Activated T-helper 2 cell treated with anti-CD3 and anti-CD28 coated beads, Interferon-gamma antibody, Interleukin-2, Interleukin-4, amounts not matched to agents 10 μg/mL and 5 μg/mL and 100 μg/mL, durations not matched to agents 14 hours and 24 hours and 36 hours (primary cell): ENCODE measurements at regions of chr1 and their contacts with region 1.

Region 1: GRCh38 chr1:158285756-158286241 is 3.9 kb upstream of the CD1C start:
- DNase-seq: no peak
- H3K4me3 Mint-ChIP-seq: no peak overlapping the region
- H3K27ac Mint-ChIP-seq: peak overlapping the region; percentile 69
- H3K4me1 Mint-ChIP-seq: peaks cover 26% of the 10 kb centered on the region
- H3K27me3 Mint-ChIP-seq: peaks cover 3% of the 10 kb centered on the region

Region 2: DNA sequence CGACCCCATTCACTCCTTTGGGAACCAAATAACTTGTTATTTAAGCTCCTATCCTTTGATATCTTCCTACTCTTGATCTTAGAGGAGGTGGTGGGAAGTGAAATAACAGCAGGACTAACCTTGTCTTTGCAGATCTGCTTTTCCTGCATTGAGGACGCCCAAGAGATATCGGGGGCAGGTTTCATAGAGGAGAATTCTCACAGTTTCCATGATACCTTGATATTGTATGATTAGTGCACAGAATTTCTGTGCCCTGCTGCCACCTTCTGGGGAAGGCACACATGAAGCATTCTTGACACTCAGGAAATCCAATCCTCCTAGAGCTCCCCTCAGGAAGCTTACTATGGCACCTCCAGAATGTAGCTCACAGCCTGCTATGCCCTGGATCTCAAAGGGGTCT is 43.9 kb after region 1 on chr1:
- intact Hi-C with region 1: loop called (anchors 5 kb)
- DNase-seq: no peak
- H3K4me3 Mint-ChIP-seq: no peak overlapping the region
- H3K27ac Mint-ChIP-seq: no peak overlapping the region
- H3K4me1 Mint-ChIP-seq: peaks cover 11% of the 10 kb centered on the region
- H3K27me3 Mint-ChIP-seq: peaks cover 1% of the 10 kb centered on the region

Region 3: GRCh38 chr1:158398818-158399514 is 113.2 kb after region 1 on chr1 and contains the start of gene OR10T2:
- intact Hi-C with region 1: no loop called
- DNase-seq: no peak
- H3K4me3 Mint-ChIP-seq: no peak within 1 kb of the TSS
- H3K27ac Mint-ChIP-seq: no peak within 1 kb of the TSS
- H3K4me1 Mint-ChIP-seq: peaks cover 3% of the 10 kb centered on the region
- H3K27me3 Mint-ChIP-seq: peaks cover 21% of the 10 kb centered on the region
- total RNA-seq, gene OR10T2: not detected in 2 replicates